Calu3 (cell line): ENCODE measurements at regions of chr18 and their contacts with region 1.

Region 1: DNA sequence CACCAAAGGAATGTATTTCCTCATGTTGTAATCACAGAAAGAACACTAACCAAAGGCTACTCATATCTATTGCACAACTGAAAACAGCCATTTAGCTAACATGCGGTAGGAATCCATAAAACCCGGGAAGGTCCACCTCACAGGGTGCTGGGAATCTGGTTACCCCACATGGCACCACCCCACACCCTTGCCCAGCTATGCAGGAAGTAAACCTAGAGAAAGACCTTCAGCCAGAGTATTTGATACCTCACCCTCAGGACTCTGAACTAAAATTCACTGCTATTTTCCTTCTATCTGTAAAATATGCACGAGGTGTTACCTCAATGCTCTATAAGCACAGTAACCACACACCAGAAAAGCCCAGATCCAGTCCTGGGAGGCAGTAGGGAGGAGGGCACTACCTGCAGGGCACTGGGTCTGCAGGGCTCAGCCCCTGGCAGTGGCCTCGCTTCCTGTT is 45.8 kb downstream of the PTPN2 start:
- DNase-seq: peak; percentile 93
- H3K4me3 Mint-ChIP-seq: peak overlapping the region; percentile 58
- H3K27ac Mint-ChIP-seq: peak overlapping the region; percentile 42
- H3K4me1 Mint-ChIP-seq: peaks cover 60% of the 10 kb centered on the region
- H3K27me3 Mint-ChIP-seq: no peaks in the 10 kb centered on the region
- CTCF ChIP-seq: no peak

Region 2: DNA sequence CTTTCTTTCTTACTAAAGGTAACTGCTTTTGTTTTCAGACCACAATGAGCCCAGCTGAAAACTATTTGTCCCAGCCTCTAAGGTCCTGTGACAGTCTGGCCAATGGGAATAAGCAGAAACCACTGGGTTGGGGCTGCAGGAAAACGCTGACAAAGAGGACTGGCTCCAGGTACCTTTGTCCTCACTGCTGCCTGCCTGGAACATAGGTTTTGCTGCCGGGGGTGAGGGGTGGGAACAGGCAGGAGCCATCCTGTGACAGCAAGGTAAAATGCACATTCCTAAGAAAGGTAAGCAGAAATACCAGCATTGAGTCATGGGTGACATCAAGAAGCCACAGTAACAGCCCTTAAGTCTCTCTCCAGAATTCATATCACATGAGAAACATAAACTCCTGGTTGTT is 24.3 kb after region 1 on chr18:
- CTCF ChIA-PET with region 1: no interaction called
- intact Hi-C with region 1: loop called (anchors 2 kb)
- DNase-seq: peak; percentile 74
- H3K4me3 Mint-ChIP-seq: peak overlapping the region; percentile 61
- H3K27ac Mint-ChIP-seq: peak overlapping the region; percentile 77
- H3K4me1 Mint-ChIP-seq: peaks cover 36% of the 10 kb centered on the region
- H3K27me3 Mint-ChIP-seq: no peaks in the 10 kb centered on the region
- CTCF ChIP-seq: no peak

Region 3: GRCh38 chr18:12883684-12884405 is 45.6 kb after region 1 on chr18 and contains the start of gene PTPN2:
- CTCF ChIA-PET with region 1: interaction called, 4 read pairs
- intact Hi-C with region 1: loop called (anchors 2 kb)
- DNase-seq: peak; percentile 90
- H3K4me3 Mint-ChIP-seq: peak within 1 kb of the TSS; percentile 90
- H3K27ac Mint-ChIP-seq: peak within 1 kb of the TSS; percentile 98
- H3K4me1 Mint-ChIP-seq: peaks cover 47% of the 10 kb centered on the region
- H3K27me3 Mint-ChIP-seq: no peaks in the 10 kb centered on the region
- CTCF ChIP-seq: no peak
- total RNA-seq, gene PTPN2: 58.1 and 61.5 TPM in 2 replicates